Activated B cell treated with CpG ODN at 0.5 μM for 24 hours (primary cell): ENCODE measurements at regions of chr7 and their contacts with region 1.

Region 1: GRCh38 chr7:32891800-32892520 is 400 bp upstream of the KBTBD2 start:
- DNase-seq: peak; percentile 96
- ATAC-seq: peak; percentile 66
- H3K4me3 Mint-ChIP-seq: peak overlapping the region; percentile 91
- H3K27ac Mint-ChIP-seq: peak overlapping the region; percentile 97
- H3K4me1 Mint-ChIP-seq: peaks cover 56% of the 10 kb centered on the region
- H3K27me3 Mint-ChIP-seq: no peaks in the 10 kb centered on the region
- CTCF ChIP-seq: no peak

Region 2: GRCh38 chr7:32846701-32847100 is 45.3 kb before region 1 on chr7:
- CTCF ChIA-PET with region 1: interaction called, 10 read pairs
- POLR2A ChIA-PET with region 1: interaction called, 10 read pairs
- intact Hi-C with region 1: loop called (anchors 1 kb)
- DNase-seq: peak; percentile 81
- ATAC-seq: peak; percentile 100
- H3K4me3 Mint-ChIP-seq: no peak overlapping the region
- H3K27ac Mint-ChIP-seq: no peak overlapping the region
- H3K4me1 Mint-ChIP-seq: peaks cover 5% of the 10 kb centered on the region
- H3K27me3 Mint-ChIP-seq: peaks cover 18% of the 10 kb centered on the region
- CTCF ChIP-seq: peak; percentile 52

Region 3: DNA sequence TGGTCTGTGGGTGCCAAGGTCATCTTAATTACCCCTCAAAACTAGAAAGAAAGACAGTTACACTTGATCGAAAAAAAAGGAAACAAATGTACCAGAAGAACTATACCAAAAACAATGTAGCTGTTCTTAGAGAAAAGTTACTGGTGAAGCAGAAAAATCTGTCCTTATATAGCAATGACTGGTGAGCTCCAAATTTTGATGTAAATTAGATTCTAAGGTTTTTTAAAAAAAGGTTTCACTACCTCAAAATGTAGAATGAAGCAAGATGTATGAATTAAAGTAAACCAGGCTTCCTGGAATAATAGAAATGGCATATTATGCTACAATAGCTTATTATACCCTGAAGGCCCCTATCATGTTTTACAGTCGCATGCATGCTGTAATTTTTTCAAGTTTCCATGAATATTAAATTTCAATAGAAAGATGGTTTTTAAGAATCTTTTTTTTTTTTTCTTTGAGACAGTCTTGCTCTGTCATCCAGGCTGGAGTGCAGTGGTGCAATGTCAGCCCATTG is 36.9 kb after region 1 on chr7:
- CTCF ChIA-PET with region 1: no interaction called
- POLR2A ChIA-PET with region 1: interaction called, 30 read pairs
- intact Hi-C with region 1: loop called (anchors 1 kb)
- DNase-seq: no peak
- ATAC-seq: peak; percentile 81
- H3K4me3 Mint-ChIP-seq: peak overlapping the region; percentile 30
- H3K27ac Mint-ChIP-seq: peak overlapping the region; percentile 81
- H3K4me1 Mint-ChIP-seq: peaks cover 25% of the 10 kb centered on the region
- H3K27me3 Mint-ChIP-seq: no peaks in the 10 kb centered on the region
- CTCF ChIP-seq: no peak

Region 4: DNA sequence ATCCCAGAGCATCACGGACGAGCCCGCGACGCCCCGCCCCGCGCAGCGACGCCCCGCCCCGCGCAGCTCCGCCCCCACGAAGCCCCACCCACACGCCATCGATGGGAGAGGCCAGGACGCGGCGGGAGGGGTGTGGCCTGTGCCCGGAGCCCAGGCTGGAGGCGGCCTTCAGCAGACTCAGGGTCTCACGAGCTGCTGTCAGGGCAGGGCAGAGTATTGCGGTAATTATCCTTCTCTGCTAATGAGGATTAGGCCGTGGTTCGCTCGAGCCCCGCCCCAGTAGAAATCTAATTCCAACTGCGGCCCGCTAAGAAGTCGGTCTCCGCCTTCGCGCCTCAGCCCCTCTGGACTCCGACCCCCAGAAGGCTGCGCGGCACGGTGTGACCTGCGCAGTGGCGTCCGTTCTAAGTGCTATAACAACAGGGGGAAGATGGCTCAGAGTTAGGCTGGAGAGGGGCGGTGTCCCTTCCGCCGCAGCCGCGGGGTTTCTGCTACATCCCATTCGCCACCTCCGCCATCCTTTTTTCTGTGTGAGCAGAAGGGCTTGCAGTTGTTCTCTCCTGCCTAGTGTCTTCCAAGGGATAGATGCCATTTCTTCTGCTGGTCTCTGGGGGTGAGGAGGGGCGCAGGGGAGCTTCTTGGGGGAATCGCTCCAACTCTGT is 171.0 kb after region 1 on chr7:
- CTCF ChIA-PET with region 1: no interaction called
- POLR2A ChIA-PET with region 1: interaction called, 9 read pairs
- intact Hi-C with region 1: loop called (anchors 1 kb)
- DNase-seq: peak; percentile 91
- ATAC-seq: peak; percentile 93
- H3K4me3 Mint-ChIP-seq: peak overlapping the region; percentile 91
- H3K27ac Mint-ChIP-seq: peak overlapping the region; percentile 89
- H3K4me1 Mint-ChIP-seq: peaks cover 43% of the 10 kb centered on the region
- H3K27me3 Mint-ChIP-seq: no peaks in the 10 kb centered on the region
- CTCF ChIP-seq: no peak